ENCODE measurements at regions of chr6 and their contacts with region 1.

Region 1: DNA sequence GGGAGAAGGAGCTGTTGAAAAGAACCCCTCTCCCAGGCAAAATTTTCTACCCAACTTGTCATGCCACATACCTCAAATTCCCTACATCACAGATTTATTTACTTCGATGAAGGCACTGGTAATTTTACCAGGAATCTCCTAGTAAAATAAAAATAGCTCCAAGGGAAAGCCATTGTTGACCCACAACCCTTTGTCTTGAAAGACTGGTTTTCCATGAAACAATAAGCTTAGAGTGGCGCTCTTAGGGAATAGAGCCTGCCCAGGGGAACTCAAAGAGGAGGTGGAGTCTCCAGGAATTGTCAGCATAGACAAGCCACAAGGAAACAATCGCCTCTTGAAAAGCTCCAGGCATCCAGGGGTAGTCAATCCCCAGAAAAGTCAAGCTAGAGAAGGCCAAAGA is 99.3 kb upstream of the RREB1 start:
- DNase-seq: peak; percentile 41 to 83
- H3K4me3 ChIP-seq: no peak overlapping the region
- H3K27ac ChIP-seq: peak overlapping the region; percentile 51
- H3K4me1 ChIP-seq: peaks cover 16% of the 10 kb centered on the region
- H3K27me3 ChIP-seq: no peaks in the 10 kb centered on the region
- CTCF ChIP-seq: no peak

Region 2: DNA sequence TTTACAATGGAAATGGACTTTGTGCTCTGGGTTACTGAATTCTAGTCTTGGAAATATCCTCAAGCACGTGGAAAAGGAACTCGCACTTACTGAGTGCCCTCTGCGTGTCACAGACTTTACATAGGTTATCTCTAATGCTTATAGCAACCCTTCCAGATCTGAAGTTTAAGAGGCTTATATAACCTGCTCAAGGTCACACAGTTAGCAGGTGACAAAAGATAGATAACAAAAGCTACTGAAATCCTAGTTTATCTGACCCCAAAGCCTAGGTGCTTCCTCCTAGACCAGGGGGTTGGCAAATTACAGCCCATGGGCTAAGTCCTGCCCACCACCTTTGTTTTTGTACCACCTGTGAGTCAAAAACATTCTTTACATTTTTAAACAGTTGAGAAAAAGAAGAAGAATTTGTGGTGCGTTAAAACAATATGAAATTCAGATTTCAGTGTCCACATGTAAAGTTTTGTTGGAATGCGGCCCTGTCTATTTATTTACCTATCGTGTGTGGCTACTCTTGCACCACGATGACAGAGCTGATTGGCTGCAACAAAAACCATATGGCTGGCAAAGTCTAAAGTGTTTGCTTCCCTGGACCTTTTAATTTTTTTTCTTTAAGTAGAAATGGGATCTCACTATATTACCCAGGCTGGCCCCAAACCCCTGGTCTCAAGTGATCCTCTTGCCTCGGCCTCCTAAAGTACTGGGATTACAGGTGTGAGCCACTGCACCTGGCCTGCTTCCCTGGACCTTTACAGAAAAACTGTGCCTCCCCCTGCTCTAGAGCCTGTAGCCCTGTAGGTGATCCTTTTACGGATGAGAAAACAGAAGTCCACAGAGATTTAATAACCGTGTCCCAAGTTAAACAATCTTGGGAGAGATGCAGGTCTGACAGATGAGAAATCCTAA is 10.9 kb before region 1 on chr6:
- CTCF ChIA-PET with region 1: no interaction called
- POLR2A ChIA-PET with region 1: no interaction called
- intact Hi-C with region 1: loop called (anchors 1 kb)
- DNase-seq: peak; percentile 25 to 65
- H3K4me3 ChIP-seq: no peak overlapping the region
- H3K27ac ChIP-seq: no peak overlapping the region
- H3K4me1 ChIP-seq: peaks cover 26% of the 10 kb centered on the region
- H3K27me3 ChIP-seq: no peaks in the 10 kb centered on the region
- CTCF ChIP-seq: no peak

Region 3: DNA sequence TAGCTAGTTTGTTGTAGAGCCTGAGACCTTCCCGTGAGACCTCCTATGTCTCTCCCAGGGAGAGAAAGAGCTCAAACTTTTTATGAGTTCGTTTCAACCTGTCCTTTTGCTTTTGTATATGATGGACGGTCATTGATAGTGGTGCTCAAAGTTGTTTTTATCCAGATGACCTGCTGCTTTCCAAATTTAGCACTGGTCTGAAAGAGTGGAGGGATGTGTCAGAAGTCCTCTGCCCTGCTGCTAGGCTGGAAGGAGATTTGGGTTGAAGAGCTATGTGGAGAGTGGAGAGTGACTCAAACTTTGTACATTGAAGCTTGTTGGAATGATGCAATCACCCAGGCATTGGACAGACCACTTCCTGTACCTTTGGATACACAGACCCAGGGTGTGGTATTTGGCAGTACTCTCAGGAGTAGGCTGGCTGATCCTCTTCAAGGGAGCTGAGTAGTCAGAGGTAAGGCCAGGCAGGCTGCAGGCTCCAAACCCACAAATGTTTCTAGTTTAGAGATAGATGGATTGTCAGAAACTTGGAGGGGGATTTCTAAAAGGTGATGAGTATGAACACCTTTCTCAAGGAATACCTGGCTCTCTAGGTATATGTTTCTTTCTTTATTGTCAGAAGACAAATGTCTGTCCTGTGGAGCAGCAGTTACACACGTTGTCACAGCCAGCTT is 49.9 kb after region 1 on chr6:
- CTCF ChIA-PET with region 1: no interaction called
- POLR2A ChIA-PET with region 1: no interaction called
- intact Hi-C with region 1: loop called (anchors 2 kb)
- DNase-seq: peak; percentile 82 to 95
- H3K4me3 ChIP-seq: no peak overlapping the region
- H3K27ac ChIP-seq: peak overlapping the region; percentile 87
- H3K4me1 ChIP-seq: peaks cover 48% of the 10 kb centered on the region
- H3K27me3 ChIP-seq: no peaks in the 10 kb centered on the region
- CTCF ChIP-seq: no peak

Region 4: GRCh38 chr6:7431674-7432390 is 423.3 kb after region 1 on chr6:
- CTCF ChIA-PET with region 1: interaction called, 15 read pairs
- POLR2A ChIA-PET with region 1: no interaction called
- intact Hi-C with region 1: no loop called
- DNase-seq: no peak
- H3K4me3 ChIP-seq: no peak overlapping the region
- H3K27ac ChIP-seq: no peak overlapping the region
- H3K4me1 ChIP-seq: no peaks in the 10 kb centered on the region
- H3K27me3 ChIP-seq: no peaks in the 10 kb centered on the region
- CTCF ChIP-seq: no peak